Heart left ventricle (tissue), 16 donors: ENCODE measurements at regions of chr13 and their contacts with region 1.

Region 1: DNA sequence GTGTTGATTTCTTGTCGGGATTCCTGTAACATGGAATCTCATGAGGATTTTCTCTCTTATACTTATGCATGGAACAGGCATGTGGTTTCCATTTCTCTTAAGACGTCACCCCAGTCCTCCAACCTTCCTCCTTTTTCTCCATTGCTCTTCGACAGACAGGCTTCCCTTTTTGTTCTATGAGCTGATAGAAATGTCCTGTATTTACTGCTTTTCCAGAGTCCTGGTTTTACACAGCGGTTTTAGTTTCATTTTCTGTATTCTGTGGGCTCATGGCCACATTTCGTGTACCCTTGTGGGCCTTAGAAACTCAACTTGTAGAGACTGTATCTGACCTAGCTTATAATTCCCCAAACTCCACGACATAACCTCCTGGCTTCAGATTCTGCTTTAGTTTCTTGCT is 113.1 kb downstream of the PAN3 start:
- DNase-seq: no peak
- ATAC-seq: no peak
- H3K4me3 ChIP-seq: peak overlapping the region in 1 of 12 donors; percentile 19
- H3K27ac ChIP-seq: no peak overlapping the region
- H3K4me1 ChIP-seq: peaks cover 0 to 27% (median 0%) of the 10 kb centered on the region in 12 donors
- H3K27me3 ChIP-seq: no peaks in the 10 kb centered on the region
- CTCF ChIP-seq: no peak
- POLR2A ChIP-seq: no peak

Region 2: DNA sequence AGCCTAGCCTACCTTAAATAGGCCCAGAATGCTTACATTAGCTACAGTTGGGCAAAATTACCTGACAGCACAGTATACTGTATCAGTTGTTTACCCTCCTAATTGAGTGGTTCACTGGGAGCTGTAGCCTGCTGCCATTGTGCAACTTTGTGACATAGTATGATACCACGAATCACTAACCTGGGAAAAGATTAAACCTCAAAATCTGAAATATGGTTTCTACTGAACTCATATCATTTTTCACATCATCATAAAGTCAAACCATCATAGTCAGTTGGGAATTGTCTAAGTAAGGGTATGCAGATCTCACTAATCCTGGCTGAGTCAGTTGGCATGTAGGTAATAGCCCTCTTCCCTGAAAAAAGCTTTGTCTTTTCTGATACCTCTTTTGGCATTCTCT is 104.0 kb before region 1 on chr13:
- intact Hi-C with region 1: loop called in 1 of 10 experiments (anchors 10 kb)
- DNase-seq: no peak
- ATAC-seq: no peak
- H3K4me3 ChIP-seq: no peak overlapping the region
- H3K27ac ChIP-seq: no peak overlapping the region
- H3K4me1 ChIP-seq: peaks cover 0 to 31% (median 8%) of the 10 kb centered on the region in 12 donors
- H3K27me3 ChIP-seq: no peaks in the 10 kb centered on the region
- CTCF ChIP-seq: no peak
- POLR2A ChIP-seq: no peak

Region 3: DNA sequence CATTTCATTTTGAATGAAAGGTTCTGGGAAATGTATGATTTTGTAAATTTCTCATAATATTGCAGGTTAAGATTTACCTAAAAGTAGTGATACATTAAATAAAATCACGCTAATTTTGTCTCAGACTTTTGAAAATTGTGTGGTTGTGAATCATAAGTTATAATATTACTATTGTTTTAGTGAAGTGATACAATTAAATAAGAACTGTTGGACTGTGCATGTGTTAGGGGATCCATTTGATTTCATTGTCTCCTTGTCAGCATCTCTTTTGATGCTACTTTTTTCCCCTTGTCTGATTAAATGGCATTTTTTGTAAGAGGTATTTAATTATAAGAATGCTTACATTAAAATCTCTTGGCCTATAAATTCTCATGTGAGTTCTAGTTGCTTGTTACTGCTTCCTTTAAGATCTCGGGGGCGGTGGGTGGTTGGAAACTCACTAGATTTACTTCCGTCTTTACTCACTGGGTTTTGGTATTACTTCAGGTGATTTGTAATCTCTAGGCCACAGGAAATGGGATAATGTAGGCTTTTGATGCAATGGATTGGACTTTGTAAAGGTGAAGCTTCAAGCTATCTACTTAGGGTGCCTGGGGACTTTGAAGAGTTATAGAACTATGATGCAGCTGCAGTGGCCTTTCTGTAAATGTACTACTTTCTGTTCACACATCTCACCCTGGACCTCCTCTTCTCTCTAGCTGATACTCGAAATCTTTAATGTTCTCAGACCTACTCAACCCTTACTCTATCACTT is 46.6 kb before region 1 on chr13:
- intact Hi-C with region 1: no loop called
- DNase-seq: no peak
- ATAC-seq: no peak
- H3K4me3 ChIP-seq: no peak overlapping the region
- H3K27ac ChIP-seq: no peak overlapping the region
- H3K4me1 ChIP-seq: no peaks in the 10 kb centered on the region
- H3K27me3 ChIP-seq: no peaks in the 10 kb centered on the region
- CTCF ChIP-seq: no peak
- POLR2A ChIP-seq: no peak